ENCODE measurements at regions of chr10 and their contacts with region 1.

Region 1: GRCh38 chr10:931416-932318 is at the start of gene LARP4B:
- DNase-seq: peak; percentile 91
- ATAC-seq: peak; percentile 98
- H3K4me3 ChIP-seq: peak within 1 kb of the TSS; percentile 68 to 73
- H3K27ac ChIP-seq: peak within 1 kb of the TSS; percentile 94
- H3K4me1 ChIP-seq: peaks cover 9 to 10% of the 10 kb centered on the region in 2 experiments; a peak in 3 of 4 replicates
- H3K27me3 ChIP-seq: no peaks in the 10 kb centered on the region
- CTCF ChIP-seq: no peak
- POLR2A ChIP-seq: peak; percentile 45
- RAD21 ChIP-seq: no peak
- total RNA-seq, gene LARP4B: 122 TPM

Region 2: DNA sequence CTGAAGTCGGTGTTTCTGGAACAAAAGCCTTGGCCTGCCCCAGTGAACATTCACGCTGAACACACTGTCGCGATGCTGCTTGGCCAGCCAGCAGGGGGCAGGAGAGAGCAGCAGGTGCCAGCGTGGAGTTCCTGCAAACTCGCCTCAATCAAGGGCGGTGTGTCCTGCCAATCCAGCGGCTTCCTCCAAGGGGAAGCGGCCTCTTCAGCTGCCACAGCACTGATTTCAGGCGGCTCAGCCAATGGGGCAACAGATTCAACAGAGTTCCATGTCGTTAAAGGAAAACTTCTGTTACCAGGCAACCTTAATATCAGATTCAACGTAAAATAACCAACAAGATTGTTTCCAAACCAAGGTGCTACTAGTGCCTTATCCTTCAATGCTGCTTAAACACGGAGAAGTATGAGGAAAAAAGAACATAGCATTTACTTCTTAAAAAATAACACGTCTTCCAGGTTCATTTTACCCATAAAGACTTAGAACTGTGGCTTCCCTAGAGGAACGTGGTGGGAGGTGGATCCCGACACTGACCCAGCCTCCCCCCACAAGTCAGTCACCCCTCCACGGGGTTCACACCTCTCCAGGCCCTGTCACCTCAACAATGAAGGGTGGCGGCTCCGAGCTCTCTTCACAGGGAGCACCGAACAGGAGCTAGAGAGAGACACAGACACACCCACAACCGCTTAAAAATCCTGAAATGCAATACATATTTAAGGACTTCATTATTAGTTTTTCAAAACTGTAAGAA is 420.4 kb before region 1 on chr10:
- CTCF ChIA-PET with region 1: no interaction called
- POLR2A ChIA-PET with region 1: no interaction called
- RAD21 ChIA-PET with region 1: no interaction called
- intact Hi-C with region 1: loop called (anchors 2 kb)
- DNase-seq: peak; percentile 83
- ATAC-seq: peak; percentile 97
- H3K4me3 ChIP-seq: no peak overlapping the region
- H3K27ac ChIP-seq: no peak overlapping the region
- H3K4me1 ChIP-seq: peaks cover 0 to 10% of the 10 kb centered on the region in 2 experiments; a peak in 2 of 4 replicates
- H3K27me3 ChIP-seq: no peaks in the 10 kb centered on the region
- CTCF ChIP-seq: peak; percentile 78 to 99 (median 98)
- POLR2A ChIP-seq: no peak
- RAD21 ChIP-seq: peak; percentile 90

Region 3: DNA sequence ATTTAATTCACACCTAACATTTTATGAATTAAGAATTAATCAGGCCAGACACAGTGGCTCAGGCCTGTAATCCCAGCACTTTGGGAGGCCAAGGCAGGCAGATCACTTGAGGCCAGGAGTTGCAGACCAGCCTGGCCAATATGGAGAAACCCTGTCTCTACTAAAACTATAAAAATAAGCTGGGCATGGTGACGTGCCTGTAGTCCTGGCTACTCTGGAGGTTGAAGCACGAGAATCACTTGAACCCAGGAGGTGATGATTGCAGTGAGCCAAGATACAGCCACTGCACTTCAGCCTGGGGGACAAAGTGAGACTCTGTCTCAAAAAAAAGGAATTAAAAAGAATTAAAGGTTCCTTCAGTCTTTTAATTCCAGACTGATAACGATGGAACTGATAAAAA is 11.2 kb before region 1 on chr10:
- CTCF ChIA-PET with region 1: no interaction called
- POLR2A ChIA-PET with region 1: no interaction called
- RAD21 ChIA-PET with region 1: no interaction called
- intact Hi-C with region 1: no loop called
- DNase-seq: no peak
- ATAC-seq: no peak
- H3K4me3 ChIP-seq: no peak overlapping the region
- H3K27ac ChIP-seq: no peak overlapping the region
- H3K4me1 ChIP-seq: no peaks in the 10 kb centered on the region
- H3K27me3 ChIP-seq: no peaks in the 10 kb centered on the region
- CTCF ChIP-seq: no peak
- POLR2A ChIP-seq: no peak
- RAD21 ChIP-seq: no peak

Region 4: GRCh38 chr10:987870-988666 is 56.4 kb after region 1 on chr10 and contains the start of gene GTPBP4:
- CTCF ChIA-PET with region 1: no interaction called
- POLR2A ChIA-PET with region 1: interaction called, 4 read pairs
- RAD21 ChIA-PET with region 1: no interaction called
- intact Hi-C with region 1: loop called (anchors 5 kb)
- DNase-seq: peak; percentile 94
- ATAC-seq: peak; percentile 94
- H3K4me3 ChIP-seq: peak within 1 kb of the TSS; percentile 95 to 99
- H3K27ac ChIP-seq: peak within 1 kb of the TSS; percentile 68
- H3K4me1 ChIP-seq: peaks cover 12 to 38% of the 10 kb centered on the region in 2 experiments
- H3K27me3 ChIP-seq: no peaks in the 10 kb centered on the region
- CTCF ChIP-seq: peak in 1 of 3 experiments; percentile 27; a peak in 2 of 6 replicates
- POLR2A ChIP-seq: peak; percentile 32
- RAD21 ChIP-seq: no peak
- total RNA-seq, gene GTPBP4: 111 TPM

Region 5: DNA sequence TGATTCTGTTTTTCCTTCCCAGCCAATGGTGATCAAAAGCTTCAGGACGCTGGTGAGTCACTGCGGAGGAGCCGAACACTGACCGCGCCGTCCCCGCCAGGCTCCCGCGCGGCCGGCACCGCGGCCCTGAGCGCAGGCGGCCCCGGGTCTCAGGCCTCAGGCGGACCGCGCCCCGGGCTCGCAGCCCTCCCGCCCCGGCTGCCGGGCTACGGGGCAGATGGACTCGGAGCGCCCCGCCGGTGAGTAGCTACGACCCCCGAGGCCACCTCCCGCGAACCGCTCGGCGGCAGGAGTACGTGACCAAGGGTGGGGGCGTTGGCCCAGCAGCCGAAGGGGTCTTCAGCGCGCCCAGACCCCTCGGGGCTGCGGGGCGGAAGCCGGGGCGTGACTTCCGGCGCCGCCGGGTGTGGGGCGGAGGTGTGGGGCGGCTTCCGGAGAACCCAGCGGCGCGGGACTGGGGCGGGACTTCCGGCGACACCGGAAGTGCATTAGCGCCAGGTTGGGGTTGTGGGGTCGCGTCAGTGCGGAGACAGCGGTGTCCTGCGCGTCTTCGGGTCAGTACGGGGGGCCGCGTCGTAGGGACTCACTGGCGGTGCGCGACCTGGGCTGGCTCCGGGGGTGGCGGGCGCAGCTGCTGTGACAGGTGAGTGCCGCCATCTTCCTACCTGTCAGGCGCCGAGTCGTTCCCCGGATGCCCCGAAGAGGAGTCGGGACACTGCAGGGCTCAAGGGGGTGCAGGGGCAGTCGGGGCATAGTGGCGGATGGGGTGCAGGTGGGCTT is 124.8 kb after region 1 on chr10 and contains the start of gene WDR37:
- CTCF ChIA-PET with region 1: interaction called, 3 read pairs
- POLR2A ChIA-PET with region 1: no interaction called
- RAD21 ChIA-PET with region 1: no interaction called
- intact Hi-C with region 1: loop called (anchors 10 kb)
- DNase-seq: no peak
- ATAC-seq: peak; percentile 93
- H3K4me3 ChIP-seq: peak within 1 kb of the TSS; percentile 80 to 91
- H3K27ac ChIP-seq: peak within 1 kb of the TSS; percentile 89
- H3K4me1 ChIP-seq: peaks cover 12 to 16% of the 10 kb centered on the region in 2 experiments; a peak in 3 of 4 replicates
- H3K27me3 ChIP-seq: no peaks in the 10 kb centered on the region
- CTCF ChIP-seq: no peak
- POLR2A ChIP-seq: no peak
- RAD21 ChIP-seq: no peak
- total RNA-seq, gene WDR37: 9.1 TPM